RWPE1 (cell line): ENCODE measurements at regions of chr7 and their contacts with region 1.

Region 1: DNA sequence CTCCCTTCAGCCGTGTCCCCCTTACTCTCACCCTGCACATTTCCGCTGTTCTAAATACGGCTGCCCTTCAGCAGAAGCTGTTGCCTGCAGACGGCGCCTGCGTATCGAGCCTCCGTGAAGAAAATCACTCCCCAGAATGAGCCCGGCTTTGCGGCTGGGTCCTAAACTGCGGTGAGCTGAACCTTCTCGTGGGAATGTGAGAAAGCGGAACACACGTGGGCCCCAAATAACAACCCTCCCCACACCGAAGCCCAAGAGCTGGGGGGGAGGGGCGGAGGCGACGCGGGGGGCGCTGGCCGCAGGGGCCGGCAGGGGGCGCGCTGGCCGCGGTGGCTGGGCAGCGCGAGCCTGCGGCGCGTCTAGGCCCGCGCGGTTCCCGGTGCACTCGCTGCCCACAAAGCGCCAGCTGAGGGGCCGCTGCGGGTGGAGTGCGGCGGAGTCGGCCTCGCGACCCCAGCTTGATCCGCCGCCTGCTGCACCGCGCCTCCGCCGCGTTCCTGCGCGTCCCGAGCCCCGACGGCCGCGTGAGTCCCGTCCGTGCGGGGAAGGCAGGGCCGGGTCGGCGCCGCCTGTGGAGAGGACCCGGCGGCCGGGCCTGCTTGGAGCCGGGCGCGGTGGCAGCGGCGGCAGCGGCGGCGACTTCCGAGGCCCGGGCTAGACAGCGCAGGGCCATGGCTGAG is at the start of gene ZNF398:
- DNase-seq: peak; percentile 83
- H3K27ac ChIP-seq: peak within 1 kb of the TSS; percentile 84
- CTCF ChIP-seq: peak; percentile 99

Region 2: DNA sequence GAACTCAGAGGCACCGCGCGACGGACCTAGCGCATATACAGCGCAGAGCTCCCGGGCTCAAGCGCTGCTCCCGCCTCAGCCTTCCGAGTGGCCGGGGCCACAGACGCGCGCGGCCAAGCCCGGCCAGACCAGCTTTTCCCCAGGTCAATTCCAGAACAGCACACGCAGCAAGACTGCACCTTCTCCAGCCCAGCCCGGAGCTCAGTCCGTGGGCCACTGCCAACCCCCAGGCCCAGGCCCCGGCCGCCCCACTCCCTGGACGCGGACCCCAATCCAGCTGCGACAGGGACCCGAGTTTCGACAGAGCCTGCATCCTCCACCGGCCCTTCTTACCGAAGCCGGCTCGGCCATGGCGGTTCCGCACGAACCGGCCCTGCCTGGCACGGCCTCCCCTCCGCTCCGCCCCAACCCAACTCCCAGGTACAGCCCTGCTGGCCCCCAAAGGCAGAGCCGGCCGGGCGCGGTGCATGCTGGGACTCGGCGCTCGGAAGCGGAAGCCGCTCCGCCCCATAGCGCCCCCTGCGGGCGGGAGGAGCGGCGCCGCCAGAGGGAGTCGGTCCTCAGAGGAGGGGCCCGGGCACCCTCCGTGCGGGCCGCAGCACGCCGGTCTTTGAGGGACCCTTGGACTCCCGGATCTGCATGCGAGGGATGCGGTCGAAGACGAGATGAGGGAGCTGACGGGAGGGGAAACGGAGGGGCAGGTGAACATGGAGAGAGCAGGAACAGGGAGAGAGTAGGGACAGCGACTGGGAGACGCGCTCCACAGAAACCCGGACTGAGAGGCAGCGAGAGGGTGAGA is 21.1 kb before region 1 on chr7 and contains the start of gene ZNF425:
- CTCF ChIA-PET with region 1: interaction called, 19 read pairs
- POLR2A ChIA-PET with region 1: no interaction called
- DNase-seq: peak; percentile 88
- H3K27ac ChIP-seq: peak within 1 kb of the TSS; percentile 94
- CTCF ChIP-seq: peak; percentile 99